A549 (cell line): ENCODE measurements at regions of chr17 and their contacts with region 1.

Region 1: DNA sequence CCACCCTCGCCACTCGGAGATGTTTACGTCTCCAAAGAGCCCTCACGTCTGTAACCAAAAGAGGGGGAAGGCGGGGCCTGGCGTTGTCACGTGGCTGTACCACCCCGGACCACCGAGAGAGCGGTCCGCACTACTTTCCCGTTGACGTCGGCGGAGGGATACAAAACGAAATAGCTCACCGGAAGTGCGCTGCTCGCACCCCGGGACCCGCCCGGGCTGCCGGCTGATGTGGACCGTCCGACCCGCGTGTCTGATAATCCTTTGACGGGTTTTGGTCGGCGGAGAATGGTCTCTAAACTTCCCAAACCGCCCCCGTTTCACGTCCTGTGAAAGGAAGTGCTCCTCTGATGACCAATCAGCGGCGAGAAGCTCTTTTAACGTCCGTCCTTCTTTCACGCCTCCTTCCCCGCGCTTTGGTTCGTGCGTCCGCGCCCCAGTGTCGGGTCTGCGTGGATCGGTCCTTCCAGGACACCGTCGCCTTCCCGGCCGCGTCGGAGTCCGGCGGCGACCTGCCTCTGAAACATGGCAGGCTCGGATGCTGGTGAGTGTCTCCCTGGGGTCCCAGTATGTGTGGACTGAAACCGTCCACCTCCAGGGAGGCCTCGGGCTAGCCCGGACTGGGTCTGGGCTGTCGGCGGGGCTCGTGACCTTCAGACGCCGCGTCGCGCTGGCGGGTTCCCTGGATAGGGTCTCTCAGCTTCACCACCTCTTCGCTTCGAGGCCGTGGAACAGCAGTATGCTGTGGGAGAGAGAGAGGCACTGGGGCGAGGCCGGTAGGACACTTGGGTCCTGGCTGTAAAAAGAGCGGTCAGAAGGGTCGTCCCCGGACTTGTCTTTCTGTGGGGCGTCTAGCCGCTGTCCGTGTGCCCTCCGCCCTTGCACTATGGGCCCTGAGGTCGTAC is at the start of gene CEP95:
- DNase-seq: no peak
- ATAC-seq: peak; percentile 79
- H3K4me3 ChIP-seq: peak within 1 kb of the TSS; percentile 91
- H3K27ac ChIP-seq: peak within 1 kb of the TSS; percentile 96 to 97
- H3K4me1 ChIP-seq: peaks cover 40% of the 10 kb centered on the region
- CTCF ChIP-seq: no peak
- EP300 ChIP-seq: no peak; a peak in 1 of 5 replicates
- POLR2A ChIP-seq: peak; percentile 70
- RAD21 ChIP-seq: no peak
- polyA plus RNA-seq, gene CEP95: 53.5 and 73.0 TPM in 2 replicates

Region 2: DNA sequence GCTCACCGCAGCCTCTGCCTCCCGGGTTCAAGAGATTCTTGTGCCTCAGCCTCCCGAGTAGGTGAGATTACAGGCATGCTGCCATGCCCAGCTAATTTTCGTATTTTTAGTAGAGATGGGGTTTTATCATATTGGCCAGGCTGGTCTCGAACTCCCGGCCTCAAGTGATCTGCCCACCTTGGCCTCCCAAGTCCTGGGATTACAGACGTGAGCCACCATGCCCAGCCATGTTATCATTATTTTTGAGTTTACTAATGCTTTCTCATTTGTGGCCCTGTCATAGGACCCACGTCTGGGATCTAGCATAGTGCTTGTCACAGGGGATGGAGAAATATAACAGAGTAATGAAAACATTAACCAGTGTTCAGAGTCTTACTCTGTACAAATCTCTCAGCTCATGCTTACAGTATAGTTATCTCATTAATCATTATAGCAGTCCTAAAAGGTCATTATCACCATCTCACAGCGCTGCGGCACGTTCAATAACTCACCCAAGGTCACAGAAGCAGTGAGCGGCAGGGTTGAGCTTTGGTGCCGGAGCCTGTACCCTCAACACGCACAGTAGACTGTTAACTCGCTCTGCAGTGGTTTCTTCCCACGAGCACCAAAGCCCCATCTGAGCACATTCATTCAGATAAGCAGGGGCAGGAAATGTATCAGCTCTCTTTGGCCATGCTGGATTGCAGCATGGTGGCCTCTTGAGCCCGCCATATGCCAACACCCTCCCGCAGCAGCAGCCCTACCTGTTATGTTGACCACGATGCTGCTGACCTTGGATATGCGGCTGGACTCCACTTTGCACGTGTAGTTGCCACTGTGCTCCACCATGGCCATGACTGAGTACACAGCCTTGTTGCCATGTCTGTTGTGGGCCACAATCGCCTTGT is 137.6 kb before region 1 on chr17:
- CTCF ChIA-PET with region 1: no interaction called
- POLR2A ChIA-PET with region 1: no interaction called
- DNase-seq: no peak
- ATAC-seq: no peak
- H3K4me3 ChIP-seq: no peak overlapping the region
- H3K27ac ChIP-seq: no peak overlapping the region
- H3K4me1 ChIP-seq: no peaks in the 10 kb centered on the region
- CTCF ChIP-seq: no peak
- EP300 ChIP-seq: no peak
- POLR2A ChIP-seq: no peak
- RAD21 ChIP-seq: no peak

Region 3: DNA sequence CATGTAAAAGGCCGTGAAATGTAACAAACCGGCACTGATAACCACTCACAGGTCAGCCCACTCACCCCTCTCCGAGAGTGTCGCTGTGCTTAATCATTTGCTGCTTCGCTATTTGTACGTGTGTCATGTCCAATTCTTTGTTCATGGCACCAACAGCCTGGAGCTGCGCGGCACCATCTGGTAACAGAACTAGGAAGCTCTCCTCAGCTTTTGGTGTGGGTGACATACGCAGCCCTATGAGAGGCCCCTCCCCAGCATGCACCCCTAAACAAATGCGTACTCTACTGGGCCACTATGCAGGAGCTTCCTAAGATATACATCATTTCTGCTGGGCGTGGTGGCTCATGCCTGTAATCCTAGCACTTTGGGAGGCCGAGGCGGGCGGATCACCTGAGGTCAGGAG is 113.8 kb before region 1 on chr17:
- CTCF ChIA-PET with region 1: no interaction called
- POLR2A ChIA-PET with region 1: no interaction called
- DNase-seq: no peak
- ATAC-seq: no peak
- H3K4me3 ChIP-seq: no peak overlapping the region
- H3K27ac ChIP-seq: no peak overlapping the region
- H3K4me1 ChIP-seq: peaks cover 12% of the 10 kb centered on the region
- CTCF ChIP-seq: no peak
- EP300 ChIP-seq: no peak
- POLR2A ChIP-seq: no peak
- RAD21 ChIP-seq: no peak

Region 4: DNA sequence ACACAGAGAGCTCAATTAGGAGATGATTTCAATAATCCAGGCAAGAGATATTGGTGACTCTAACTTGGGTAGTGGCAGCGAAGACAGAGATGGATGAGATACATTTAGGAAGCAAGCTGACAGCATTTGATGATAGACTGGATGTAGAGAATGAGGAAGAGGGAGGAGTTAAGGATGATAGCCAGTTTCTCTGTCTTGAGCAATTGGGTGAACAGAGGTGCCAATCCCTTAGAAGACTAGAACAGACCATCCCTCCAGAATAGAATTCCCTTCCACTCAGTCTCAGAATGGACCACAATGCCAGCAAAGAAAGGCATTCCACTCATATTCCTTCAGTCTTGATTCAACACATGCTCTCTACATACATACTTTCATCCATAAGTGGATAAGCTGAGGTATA is 27.2 kb before region 1 on chr17:
- CTCF ChIA-PET with region 1: interaction called, 24 read pairs
- POLR2A ChIA-PET with region 1: interaction called, 3 read pairs
- DNase-seq: no peak
- ATAC-seq: peak in 1 of 2 experiments; percentile 47; a peak in 2 of 6 replicates
- H3K4me3 ChIP-seq: no peak overlapping the region
- H3K27ac ChIP-seq: no peak overlapping the region
- H3K4me1 ChIP-seq: peaks cover 4% of the 10 kb centered on the region; the same call in 1 of the 3 replicates
- CTCF ChIP-seq: no peak
- EP300 ChIP-seq: no peak
- POLR2A ChIP-seq: no peak
- RAD21 ChIP-seq: no peak

Region 5: DNA sequence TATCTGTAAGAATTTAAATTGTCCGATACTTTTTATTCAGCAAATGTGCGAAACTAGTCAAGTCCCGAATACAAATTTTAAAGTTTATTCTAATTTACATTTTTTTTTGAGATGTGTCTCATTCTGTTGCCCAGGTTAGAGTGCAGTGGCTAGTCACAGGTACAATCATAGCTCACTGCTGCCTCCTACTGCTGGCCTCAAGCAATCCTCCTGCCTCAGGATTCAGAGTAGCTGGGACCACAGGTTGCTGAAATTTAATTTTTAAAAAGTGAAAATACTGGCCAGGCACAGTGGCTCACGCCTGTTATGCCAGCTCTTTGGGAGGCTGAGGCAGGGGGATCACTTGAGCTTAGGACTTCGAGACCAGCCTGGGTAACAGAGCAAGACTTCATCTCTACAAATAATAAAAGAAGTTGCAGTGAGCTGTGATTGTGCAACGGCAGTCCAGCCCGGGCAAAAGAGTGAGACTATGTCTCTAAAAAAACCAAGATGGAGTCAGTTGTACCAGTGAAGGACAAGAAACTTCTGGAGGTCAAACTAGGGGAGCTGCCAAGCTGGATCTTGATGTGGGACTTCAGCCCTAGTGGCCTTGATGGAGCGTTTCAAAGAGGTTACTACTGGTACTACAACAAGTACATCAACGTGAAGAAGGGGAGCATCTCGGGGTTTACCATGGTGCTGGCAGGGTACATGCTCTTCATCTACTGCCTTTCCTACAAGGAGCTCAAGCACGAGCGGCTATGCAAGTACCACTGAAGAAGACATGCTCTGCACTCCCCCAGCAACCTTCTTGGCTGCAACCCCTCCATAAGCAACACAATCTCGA is 15.6 kb before region 1 on chr17:
- CTCF ChIA-PET with region 1: interaction called, 28 read pairs
- POLR2A ChIA-PET with region 1: interaction called, 132 read pairs
- DNase-seq: peak in 1 of 2 experiments; percentile 70
- ATAC-seq: peak; percentile 80 to 93
- H3K4me3 ChIP-seq: no peak overlapping the region
- H3K27ac ChIP-seq: no peak overlapping the region
- H3K4me1 ChIP-seq: peaks cover 26% of the 10 kb centered on the region
- CTCF ChIP-seq: peak; percentile 84
- EP300 ChIP-seq: no peak
- POLR2A ChIP-seq: no peak
- RAD21 ChIP-seq: peak; percentile 77 to 80

Region 6: DNA sequence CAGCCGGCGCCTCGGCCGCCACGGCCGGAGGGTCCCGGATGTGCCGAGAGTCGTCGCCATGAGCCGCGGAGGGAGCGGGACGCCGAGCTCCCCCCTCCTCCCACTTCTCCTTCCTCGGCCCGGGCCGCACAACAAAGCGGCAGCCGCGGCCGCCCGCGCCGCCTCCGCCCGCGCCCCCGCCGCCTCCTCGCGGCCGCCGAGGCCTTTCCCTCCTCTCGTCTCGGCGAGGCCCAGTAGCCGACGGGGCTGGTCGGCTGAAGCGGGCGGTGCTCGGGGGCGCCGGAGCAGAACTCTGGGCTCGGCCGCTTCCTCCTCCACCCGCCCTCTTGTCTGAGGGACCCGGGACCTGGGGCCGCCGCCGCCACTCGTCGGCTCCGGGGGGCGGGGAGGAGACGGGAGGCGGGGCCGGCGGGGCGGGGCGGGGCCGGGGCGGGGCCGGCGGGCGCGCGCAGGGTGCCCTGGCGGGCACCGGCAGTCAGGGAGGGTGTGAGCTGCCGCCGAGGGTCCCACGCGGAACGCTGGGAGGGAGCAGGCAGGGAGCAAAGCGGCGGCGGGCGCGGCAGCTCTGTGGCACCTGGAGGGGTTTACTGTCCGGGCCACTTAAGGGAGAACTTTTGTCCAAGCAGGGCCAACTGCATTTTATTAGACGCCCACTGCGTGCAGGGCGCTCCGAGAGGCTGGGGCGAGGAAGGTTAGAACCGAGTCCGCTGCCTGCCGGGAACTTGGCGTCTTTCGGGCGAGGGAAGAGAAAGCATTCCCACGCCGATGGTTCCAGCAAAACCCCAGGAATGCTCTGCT is 155.3 kb after region 1 on chr17 and contains the start of gene SMURF2:
- CTCF ChIA-PET with region 1: no interaction called
- POLR2A ChIA-PET with region 1: interaction called, 20 read pairs
- DNase-seq: peak; percentile 78 to 89
- ATAC-seq: peak; percentile 80 to 84
- H3K4me3 ChIP-seq: peak within 1 kb of the TSS; percentile 92
- H3K27ac ChIP-seq: peak within 1 kb of the TSS; percentile 92 to 94
- H3K4me1 ChIP-seq: peaks cover 54% of the 10 kb centered on the region
- CTCF ChIP-seq: no peak
- EP300 ChIP-seq: no peak; a peak in 1 of 5 replicates
- POLR2A ChIP-seq: peak; percentile 87
- RAD21 ChIP-seq: peak; percentile 14 to 27; a peak in 2 of 5 replicates
- polyA plus RNA-seq, gene SMURF2: 26.3 and 29.1 TPM in 2 replicates

Region 7: DNA sequence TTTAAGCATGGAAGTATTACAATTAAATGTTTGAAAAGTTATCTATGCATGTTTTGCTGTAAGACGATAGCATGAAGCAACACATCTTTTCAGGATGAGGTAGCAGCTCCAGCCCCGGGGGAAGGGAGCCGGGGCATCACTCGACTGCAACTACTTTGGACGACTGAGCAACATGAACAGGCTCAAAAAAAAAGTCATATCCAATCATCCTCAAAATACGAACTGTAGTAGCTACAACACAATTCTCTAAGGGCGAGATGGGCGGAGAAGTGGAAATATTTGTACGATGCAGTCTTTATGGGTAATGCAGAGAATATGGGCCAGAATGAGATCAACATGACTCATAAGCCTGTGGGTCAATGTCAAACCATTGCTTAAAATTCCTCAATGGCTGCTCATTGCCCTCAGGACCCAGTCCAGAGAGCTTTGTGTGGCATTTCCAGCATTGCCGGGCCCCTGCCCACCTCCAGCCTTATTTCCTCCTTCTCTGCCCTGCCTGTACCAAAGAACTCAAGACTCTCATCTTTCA is 172.9 kb after region 1 on chr17:
- CTCF ChIA-PET with region 1: no interaction called
- POLR2A ChIA-PET with region 1: interaction called, 17 read pairs
- DNase-seq: peak; percentile 95
- ATAC-seq: peak; percentile 93 to 99
- H3K4me3 ChIP-seq: peak overlapping the region; percentile 7; the same call in 2 of the 3 replicates
- H3K27ac ChIP-seq: peak overlapping the region; percentile 84 to 86
- H3K4me1 ChIP-seq: peaks cover 56% of the 10 kb centered on the region
- CTCF ChIP-seq: no peak; the same call in 2 of the 3 replicates
- EP300 ChIP-seq: peak; percentile 86 to 91
- POLR2A ChIP-seq: no peak
- RAD21 ChIP-seq: peak; percentile 41 to 59; a peak in 4 of 5 replicates